Thyroid gland (tissue), 4 donors: ENCODE measurements at regions of chr17 and their contacts with region 1.

Region 1: GRCh38 chr17:794876-795275 is 12.7 kb downstream of the MRM3 start:
- DNase-seq: peak; percentile 82 to 89
- H3K4me3 ChIP-seq: no peak overlapping the region
- H3K27ac ChIP-seq: peak overlapping the region in 1 of 3 donors; percentile 44
- H3K4me1 ChIP-seq: peaks cover 0 to 14% of the 10 kb centered on the region in 2 donors
- H3K27me3 ChIP-seq: no peaks in the 10 kb centered on the region
- CTCF ChIP-seq: peak; percentile 55 to 90 (median 82)
- POLR2A ChIP-seq: no peak

Region 2: DNA sequence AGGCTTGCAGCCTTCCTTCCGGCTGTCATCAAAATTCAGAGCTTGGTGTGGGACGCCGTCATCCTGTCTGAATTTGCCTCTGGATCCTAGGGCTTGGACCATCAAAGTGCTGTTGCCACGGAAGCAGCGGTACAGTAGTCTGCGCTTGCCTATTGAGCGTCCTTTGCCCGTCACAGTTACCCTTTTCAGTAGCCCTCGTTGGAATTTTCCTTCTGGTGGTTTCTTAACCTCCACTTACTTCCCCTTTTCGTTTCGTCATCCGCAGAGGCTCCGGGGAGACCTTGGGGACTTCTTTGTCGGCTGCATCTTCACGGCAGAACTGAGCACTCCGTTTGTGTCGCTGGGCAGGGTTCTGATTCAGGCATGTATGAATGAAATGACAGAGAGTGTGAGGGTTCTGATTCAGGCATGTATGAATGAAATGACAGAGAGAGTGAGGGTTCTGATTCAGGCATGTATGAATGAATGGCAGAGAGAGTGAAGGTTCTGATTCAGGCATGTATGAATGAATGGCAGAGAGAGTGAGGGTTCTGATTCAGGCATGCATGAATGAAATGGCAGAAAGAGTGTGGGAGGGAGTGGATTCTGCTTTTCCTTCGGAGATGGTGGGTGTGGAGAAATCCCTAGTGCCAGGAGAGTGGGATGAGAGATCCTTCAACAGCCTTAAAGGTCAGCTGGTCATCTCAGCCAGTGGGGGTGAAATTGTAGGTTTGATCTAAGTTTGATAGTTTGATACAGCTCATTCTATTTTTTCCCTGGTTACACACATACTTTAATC is 54.4 kb before region 1 on chr17:
- intact Hi-C with region 1: no loop called
- DNase-seq: no peak
- H3K4me3 ChIP-seq: no peak overlapping the region
- H3K27ac ChIP-seq: no peak overlapping the region
- H3K4me1 ChIP-seq: no peaks in the 10 kb centered on the region
- H3K27me3 ChIP-seq: no peaks in the 10 kb centered on the region
- CTCF ChIP-seq: no peak
- POLR2A ChIP-seq: no peak

Region 3: DNA sequence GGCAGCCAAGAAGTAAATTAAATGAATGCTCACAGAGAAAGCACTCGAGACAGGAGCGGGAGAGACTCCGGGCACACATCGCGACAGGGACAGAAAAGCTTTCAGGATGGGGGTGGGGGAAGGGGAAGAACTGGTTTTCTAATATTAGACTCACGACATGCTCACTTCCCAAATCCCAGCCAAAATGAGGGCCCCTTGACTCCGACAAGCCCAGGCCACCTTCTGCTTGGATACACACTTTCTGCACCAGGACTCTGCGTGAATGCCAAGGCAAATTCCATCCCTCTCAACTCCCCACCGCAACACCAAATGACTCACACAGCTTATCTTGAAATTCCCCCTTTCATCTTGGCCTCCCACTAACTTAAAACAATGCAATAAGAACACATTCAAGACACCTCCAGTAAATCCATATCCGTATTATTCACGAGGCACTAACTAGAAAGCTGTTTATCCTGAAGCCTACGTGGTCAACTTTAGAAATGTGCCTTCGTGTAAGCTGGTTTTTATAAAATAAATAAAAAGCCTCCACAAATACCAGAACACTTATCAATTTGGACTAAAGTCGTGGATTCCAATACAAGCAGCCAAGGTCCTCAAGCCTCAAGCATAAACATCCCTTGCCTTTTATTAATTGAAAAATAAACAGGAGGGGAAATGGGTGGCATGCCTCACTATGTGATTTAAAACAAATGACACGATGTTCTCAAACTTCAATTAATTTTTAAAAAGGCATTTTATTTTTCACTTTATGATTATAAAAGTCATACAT is 138.6 kb after region 1 on chr17:
- intact Hi-C with region 1: no loop called
- DNase-seq: peak; percentile 58 to 77
- H3K4me3 ChIP-seq: no peak overlapping the region
- H3K27ac ChIP-seq: peak overlapping the region in 2 of 3 donors; percentile 48 to 77
- H3K4me1 ChIP-seq: peaks cover 6 to 10% of the 10 kb centered on the region in 2 donors
- H3K27me3 ChIP-seq: no peaks in the 10 kb centered on the region
- CTCF ChIP-seq: no peak
- POLR2A ChIP-seq: no peak

Region 4: DNA sequence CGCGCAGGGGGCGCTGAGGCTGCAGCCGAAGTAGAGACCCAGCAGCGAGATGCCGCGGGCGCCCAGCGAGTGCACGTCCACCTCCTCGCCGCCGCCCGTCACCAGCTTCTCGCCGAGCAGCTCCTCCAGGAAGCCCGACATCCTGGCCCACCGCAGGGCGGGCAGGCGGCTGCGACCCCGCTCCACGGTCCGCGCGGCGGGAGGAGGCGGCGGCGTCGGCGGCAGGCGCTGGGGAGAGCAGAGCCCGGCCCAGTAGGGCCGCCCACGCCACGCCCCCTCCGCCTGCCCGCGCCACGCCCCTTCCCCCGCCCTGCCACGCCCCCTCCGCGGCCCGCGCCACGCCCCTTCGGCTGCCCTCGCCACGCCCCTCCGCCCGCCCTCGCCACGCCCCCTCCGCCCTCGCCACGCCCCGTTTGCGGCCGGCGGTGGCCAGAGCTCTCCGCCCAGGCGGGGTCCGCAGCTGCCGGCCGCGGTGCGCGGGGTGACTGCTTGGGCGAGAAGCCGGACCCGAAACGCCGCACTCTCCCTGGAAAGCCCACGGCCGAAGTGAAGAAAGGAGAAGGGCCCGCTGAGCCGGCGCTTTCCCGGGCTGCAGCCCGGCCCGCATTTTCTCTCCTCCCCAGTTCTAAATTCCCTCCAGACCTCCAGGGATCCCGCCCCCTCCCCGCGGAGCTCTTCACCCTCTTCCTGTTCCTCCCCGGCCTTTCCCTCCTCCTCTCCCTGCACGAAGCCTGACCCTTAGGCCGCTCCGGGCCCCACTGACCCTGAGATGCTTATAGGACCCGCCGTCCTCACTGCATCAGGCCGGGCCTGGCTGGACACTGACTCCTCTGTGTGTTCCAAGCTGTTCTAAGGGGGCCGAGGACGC is 184.9 kb after region 1 on chr17 and contains the start of gene NXN:
- intact Hi-C with region 1: loop called (anchors 2 kb)
- DNase-seq: peak; percentile 78 to 79
- H3K4me3 ChIP-seq: peak within 1 kb of the TSS in 2 of 3 donors; percentile 47 to 61
- H3K27ac ChIP-seq: peak within 1 kb of the TSS; percentile 76 to 81 (median 79)
- H3K4me1 ChIP-seq: peaks cover 18 to 22% of the 10 kb centered on the region in 2 donors
- H3K27me3 ChIP-seq: no peaks in the 10 kb centered on the region
- CTCF ChIP-seq: peak in 3 of 6 experiments; percentile 21 to 31 (median 24)
- POLR2A ChIP-seq: peak in 1 of 2 donors; percentile 88
- total RNA-seq, gene NXN: 14.5 to 18.3 (median 17.2) TPM

Region 5: GRCh38 chr17:1055751-1056645 is 261.1 kb after region 1 on chr17:
- intact Hi-C with region 1: loop called (anchors 10 kb)
- DNase-seq: peak; percentile 53 to 64
- H3K4me3 ChIP-seq: no peak overlapping the region
- H3K27ac ChIP-seq: no peak overlapping the region
- H3K4me1 ChIP-seq: peaks cover 0 to 4% of the 10 kb centered on the region in 2 donors
- H3K27me3 ChIP-seq: no peaks in the 10 kb centered on the region
- CTCF ChIP-seq: peak; percentile 44 to 74 (median 66)
- POLR2A ChIP-seq: no peak